Psoas muscle (tissue), 8 donors: ENCODE measurements at regions of chr16 and their contacts with region 1.

Region 1: GRCh38 chr16:75622761-75623605 is at the start of gene ADAT1:
- DNase-seq: peak; percentile 98 to 99
- ATAC-seq: peak; percentile 96 to 98 (median 97)
- H3K4me3 ChIP-seq: peak within 1 kb of the TSS; percentile 76
- H3K27ac ChIP-seq: peak within 1 kb of the TSS; percentile 91
- H3K4me1 ChIP-seq: peaks cover 17% of the 10 kb centered on the region
- H3K27me3 ChIP-seq: no peaks in the 10 kb centered on the region
- CTCF ChIP-seq: no peak
- total RNA-seq, gene ADAT1: 15.6 to 25.3 (median 20.3) TPM

Region 2: DNA sequence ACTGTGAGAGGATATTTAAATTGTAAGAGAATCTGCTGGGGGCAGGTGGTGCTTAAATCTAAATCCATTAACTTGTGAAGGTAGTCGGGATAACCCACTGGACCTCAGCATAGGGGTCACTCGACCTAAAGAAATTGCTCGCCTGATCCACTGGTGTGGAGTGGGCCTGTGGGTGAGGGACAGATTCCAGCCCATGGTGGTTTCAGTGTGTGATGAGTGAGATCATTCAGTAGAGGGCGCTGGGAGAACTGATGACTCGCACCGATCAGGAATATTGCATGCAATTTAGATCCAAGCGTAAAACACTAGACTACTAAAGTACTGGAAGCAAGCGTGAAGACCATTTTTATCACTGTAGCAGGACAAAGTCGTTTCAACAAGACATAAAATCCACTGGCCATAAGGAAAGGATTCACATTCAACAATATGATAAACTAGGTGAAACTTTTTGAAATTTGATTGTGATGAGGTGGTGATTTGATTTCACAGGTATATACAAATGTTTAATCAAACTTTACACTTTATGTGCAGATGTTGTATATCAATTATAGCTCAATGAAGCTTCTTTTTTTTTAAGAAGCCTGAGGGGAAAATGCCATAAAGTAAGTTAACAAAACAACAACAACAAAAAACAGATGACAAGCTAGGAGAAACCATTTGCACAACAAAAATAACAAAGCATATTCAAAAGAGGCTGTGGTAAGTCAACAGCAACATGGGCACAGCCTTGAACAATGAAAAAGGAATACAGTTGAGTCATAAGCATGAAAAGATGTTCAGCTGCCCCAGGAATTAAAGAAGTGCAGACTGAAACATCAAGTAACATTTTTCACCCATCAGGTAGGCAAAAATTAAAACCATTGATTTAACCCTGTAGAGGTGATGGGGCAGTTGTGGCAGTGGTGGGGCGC is 151.0 kb before region 1 on chr16:
- intact Hi-C with region 1: loop called (anchors 5 kb)
- DNase-seq: no peak
- ATAC-seq: peak; percentile 88 to 99 (median 94)
- H3K4me3 ChIP-seq: no peak overlapping the region
- H3K27ac ChIP-seq: no peak overlapping the region
- H3K4me1 ChIP-seq: no peaks in the 10 kb centered on the region
- H3K27me3 ChIP-seq: no peaks in the 10 kb centered on the region
- CTCF ChIP-seq: peak; percentile 83

Region 3: GRCh38 chr16:75566040-75566810 is 56.8 kb before region 1 on chr16 and contains the start of gene GABARAPL2:
- intact Hi-C with region 1: loop called in 1 of 2 experiments (anchors 2 kb)
- DNase-seq: peak; percentile 83 to 92
- ATAC-seq: peak; percentile 88 to 95 (median 92)
- H3K4me3 ChIP-seq: peak within 1 kb of the TSS; percentile 99
- H3K27ac ChIP-seq: peak within 1 kb of the TSS; percentile 90
- H3K4me1 ChIP-seq: peaks cover 47% of the 10 kb centered on the region
- H3K27me3 ChIP-seq: no peaks in the 10 kb centered on the region
- CTCF ChIP-seq: no peak
- total RNA-seq, gene GABARAPL2: 107 to 180 (median 148) TPM

Region 4: GRCh38 chr16:75578212-75578611 is 44.8 kb before region 1 on chr16:
- intact Hi-C with region 1: no loop called
- DNase-seq: no peak
- ATAC-seq: no peak
- H3K4me3 ChIP-seq: no peak overlapping the region
- H3K27ac ChIP-seq: no peak overlapping the region
- H3K4me1 ChIP-seq: no peaks in the 10 kb centered on the region
- H3K27me3 ChIP-seq: no peaks in the 10 kb centered on the region
- CTCF ChIP-seq: no peak

Region 5: DNA sequence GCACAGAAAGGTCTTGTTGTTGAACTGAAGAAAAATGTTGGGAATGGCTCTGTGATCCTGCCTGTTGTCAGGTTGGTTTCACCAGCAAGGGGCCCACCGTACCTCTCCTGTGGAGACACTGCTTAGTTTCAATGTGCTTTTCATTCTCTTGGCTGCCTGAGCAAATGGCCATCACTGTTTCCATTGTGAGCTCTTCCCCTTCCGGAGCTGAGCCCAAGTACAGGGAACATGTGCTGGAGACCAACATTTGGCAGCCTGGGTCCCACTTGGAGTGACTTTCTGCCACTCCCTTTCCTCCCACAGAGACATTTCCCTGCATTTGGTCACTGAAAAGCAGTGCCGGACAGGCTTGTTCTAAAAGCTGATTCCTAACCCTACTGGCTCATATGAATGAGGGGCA is 33.7 kb before region 1 on chr16:
- intact Hi-C with region 1: loop called in 1 of 2 experiments (anchors 5 kb)
- DNase-seq: peak in 1 of 2 donors; percentile 46
- ATAC-seq: no peak
- H3K4me3 ChIP-seq: no peak overlapping the region
- H3K27ac ChIP-seq: peak overlapping the region; percentile 69
- H3K4me1 ChIP-seq: no peaks in the 10 kb centered on the region
- H3K27me3 ChIP-seq: no peaks in the 10 kb centered on the region
- CTCF ChIP-seq: no peak

Region 6: DNA sequence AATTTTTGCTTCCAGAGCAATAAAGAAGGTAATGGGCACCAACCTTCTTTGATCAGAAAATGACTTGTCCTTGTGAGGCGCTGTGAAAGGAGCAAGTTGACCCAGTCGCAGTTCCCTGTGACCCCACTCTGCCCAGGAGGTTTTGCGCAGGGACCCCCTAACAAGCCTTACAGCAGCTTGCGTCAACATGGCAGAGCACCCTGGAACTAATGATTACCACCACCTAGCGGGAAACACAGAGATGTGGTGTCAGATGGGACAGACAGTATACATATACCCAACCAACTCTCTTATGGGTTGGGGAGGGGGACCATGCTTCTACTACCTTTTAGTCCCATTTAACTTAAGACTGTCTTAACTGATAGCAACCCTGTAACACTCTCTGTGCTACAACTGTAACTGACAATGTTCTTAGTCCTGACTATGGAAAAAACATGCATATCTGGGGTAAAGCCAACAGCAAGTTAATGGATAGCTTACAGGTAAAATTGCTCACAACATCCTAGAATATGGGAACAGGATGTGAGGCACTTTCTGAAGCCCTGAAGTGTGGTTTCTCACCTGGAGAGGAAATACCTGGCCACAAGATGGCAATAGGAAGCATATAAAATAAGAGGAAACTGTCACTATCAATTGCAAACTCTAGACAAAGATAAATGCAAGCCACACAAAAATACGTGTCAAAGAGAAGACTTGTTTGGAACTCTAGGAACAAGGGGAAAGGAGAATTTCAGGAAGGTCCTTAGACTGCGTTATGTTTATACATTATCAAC is 21.4 kb after region 1 on chr16:
- intact Hi-C with region 1: no loop called
- DNase-seq: no peak
- ATAC-seq: no peak
- H3K4me3 ChIP-seq: peak overlapping the region; percentile 22
- H3K27ac ChIP-seq: no peak overlapping the region
- H3K4me1 ChIP-seq: peaks cover 27% of the 10 kb centered on the region
- H3K27me3 ChIP-seq: no peaks in the 10 kb centered on the region
- CTCF ChIP-seq: no peak